H1 (cell line): ENCODE measurements at regions of chr3 and their contacts with region 1.

Region 1: DNA sequence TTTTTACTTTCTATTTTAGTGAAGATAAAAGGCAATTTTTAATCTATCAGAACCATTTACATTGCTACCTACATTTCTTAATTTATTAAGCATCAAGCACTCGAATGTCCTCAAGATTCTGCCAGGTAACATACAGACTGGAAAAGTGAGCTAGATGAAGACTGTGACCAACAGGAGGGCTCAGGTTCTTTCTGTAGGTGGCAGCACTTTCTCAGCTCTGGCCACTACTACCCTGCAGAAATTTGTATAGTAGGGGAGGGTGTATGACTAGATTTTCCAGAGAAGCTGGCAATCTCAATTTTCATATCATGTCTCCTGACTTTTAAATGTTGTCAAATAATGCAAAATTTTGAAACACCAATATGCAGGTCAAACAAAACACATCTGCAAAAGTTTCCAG is 165.0 kb upstream of the SUCLG2 start:
- DNase-seq: no peak
- H3K4me3 ChIP-seq: no peak overlapping the region
- H3K27ac ChIP-seq: no peak overlapping the region
- H3K4me1 ChIP-seq: no peaks in the 10 kb centered on the region
- H3K27me3 ChIP-seq: no peaks in the 10 kb centered on the region
- CTCF ChIP-seq: peak; percentile 17 to 77 (median 71)
- EP300 ChIP-seq: no peak
- POLR2A ChIP-seq: no peak
- RAD21 ChIP-seq: peak; percentile 78 to 81

Region 2: GRCh38 chr3:67848299-67848698 is 28.9 kb after region 1 on chr3:
- CTCF ChIA-PET with region 1: interaction called, 16 read pairs
- POLR2A ChIA-PET with region 1: no interaction called
- DNase-seq: no peak
- H3K4me3 ChIP-seq: no peak overlapping the region
- H3K27ac ChIP-seq: no peak overlapping the region
- H3K4me1 ChIP-seq: no peaks in the 10 kb centered on the region
- H3K27me3 ChIP-seq: no peaks in the 10 kb centered on the region; a peak in 1 of 7 replicates
- CTCF ChIP-seq: no peak
- EP300 ChIP-seq: no peak
- POLR2A ChIP-seq: no peak
- RAD21 ChIP-seq: no peak